GM13977 (cell line): ENCODE measurements at regions of chr10 and their contacts with region 1.

Region 1: GRCh38 chr10:96339957-96340904 is 18.6 kb downstream of the OPALIN start:
- DNase-seq: peak; percentile 54
- CTCF ChIP-seq: peak; percentile 89

Region 2: GRCh38 chr10:96017191-96017687 is 323.0 kb before region 1 on chr10:
- in situ Hi-C with region 1: loop called (anchors 25 kb)
- DNase-seq: peak; percentile 45
- CTCF ChIP-seq: peak; percentile 75

Region 3: GRCh38 chr10:96532496-96532895 is 192.3 kb after region 1 on chr10:
- in situ Hi-C with region 1: no loop called
- DNase-seq: no peak
- CTCF ChIP-seq: no peak